Cardiac septum (tissue), 1 donor: ENCODE measurements at regions of chr11 and their contacts with region 1.

Region 1: DNA sequence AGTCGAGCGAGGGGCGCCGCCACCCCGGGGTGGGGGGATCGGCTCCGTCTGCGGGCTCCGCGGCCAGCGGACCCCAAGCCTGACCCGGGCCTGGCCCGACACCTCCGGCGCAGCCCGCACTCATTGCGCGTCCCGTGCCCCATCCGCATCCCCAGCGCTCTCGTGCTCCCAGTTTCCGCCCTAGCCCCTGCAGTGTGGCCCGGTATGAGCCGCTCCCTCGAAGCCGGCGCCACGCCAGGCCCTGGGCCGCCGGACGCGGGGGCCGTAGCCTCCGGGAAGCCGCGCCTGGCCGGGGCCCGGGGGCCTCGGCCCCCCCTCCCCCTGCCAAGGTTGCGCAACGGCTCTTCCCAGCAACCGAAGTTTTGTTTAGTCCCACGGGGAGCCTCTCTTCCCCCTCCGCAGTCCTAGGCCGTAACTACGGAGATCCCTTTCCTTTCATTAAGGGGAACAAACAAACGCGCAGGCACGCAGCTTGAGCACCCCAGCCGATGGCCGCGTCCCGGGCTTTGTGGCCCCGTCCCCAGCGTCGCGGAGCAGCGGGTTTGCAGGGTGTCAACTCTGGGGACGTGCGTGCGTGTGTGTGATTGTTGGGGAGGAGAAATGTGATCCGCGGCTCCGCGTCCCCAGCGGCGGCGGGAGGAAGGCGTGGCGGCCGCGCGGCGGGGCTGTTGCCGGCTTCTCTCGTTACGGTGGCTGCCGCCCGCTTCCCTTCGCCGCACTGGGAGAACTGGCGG is 883 bp downstream of the HIPK3 start:
- DNase-seq: peak; percentile 96

Region 2: GRCh38 chr11:33161120-33162005 is 96.7 kb before region 1 on chr11 and contains the start of gene CSTF3:
- intact Hi-C with region 1: loop called (anchors 2 kb)
- DNase-seq: peak; percentile 100
- total RNA-seq, gene CSTF3: 16.0 TPM

Region 3: GRCh38 chr11:33187998-33188722 is 69.9 kb before region 1 on chr11:
- intact Hi-C with region 1: no loop called
- DNase-seq: no peak

Region 4: DNA sequence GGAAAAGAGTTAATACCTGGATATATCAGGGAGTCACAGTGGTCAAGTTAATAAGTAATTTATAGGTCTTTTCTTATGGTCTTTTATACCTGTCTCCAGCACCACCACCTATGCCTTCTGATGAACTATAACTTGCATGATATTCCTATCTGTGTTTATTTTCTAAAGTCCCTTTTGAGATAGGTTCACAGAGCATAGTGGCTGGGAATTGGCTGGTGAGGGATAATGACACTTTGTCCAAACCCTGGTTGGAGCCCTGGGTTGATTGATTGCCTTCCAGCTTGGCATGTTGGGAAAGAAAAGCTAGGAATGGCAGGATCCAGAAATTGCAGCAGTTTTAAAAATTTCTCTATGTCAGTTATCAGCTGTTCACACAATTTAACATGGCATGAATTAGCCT is 22.3 kb after region 1 on chr11:
- intact Hi-C with region 1: no loop called
- DNase-seq: no peak

Region 5: DNA sequence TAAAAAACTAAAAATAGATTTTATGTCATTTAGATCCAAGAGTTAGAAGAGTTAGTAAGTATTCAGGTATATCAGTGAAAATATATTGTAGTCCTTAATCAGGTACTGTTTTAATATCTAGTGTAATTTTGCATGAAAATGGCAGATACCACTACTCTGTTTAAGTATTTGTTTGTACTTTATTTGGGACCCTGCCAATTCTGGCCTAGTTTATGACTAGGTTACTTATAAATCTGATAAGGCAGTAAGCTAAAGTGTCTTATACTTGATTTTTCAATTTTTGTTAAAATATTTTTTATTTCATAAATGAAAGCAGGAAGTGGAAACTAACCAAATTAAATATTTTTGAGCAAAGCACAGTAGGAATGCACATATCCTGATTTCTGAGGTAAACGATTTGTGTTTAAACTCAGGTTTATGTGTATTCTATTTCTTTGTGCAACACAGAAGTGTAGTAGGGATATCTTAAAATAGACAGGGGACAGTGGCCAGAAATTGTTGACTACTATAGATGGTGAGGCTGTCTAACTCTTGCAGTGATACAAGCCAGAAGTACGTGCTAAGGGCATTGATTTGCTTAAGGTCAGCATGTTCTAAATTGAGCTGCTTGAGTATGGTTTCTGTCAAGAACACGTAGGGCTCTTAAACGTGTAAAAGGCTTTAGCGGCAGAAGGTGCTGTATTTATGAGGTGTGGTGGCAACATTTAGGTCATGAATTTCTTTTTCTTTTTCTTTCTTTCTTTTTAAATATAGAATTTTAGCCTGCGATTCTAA is 33.1 kb after region 1 on chr11:
- intact Hi-C with region 1: loop called (anchors 5 kb)
- DNase-seq: no peak

Region 6: GRCh38 chr11:33329705-33330329 is 71.8 kb after region 1 on chr11:
- intact Hi-C with region 1: loop called (anchors 5 kb)
- DNase-seq: no peak

Region 7: DNA sequence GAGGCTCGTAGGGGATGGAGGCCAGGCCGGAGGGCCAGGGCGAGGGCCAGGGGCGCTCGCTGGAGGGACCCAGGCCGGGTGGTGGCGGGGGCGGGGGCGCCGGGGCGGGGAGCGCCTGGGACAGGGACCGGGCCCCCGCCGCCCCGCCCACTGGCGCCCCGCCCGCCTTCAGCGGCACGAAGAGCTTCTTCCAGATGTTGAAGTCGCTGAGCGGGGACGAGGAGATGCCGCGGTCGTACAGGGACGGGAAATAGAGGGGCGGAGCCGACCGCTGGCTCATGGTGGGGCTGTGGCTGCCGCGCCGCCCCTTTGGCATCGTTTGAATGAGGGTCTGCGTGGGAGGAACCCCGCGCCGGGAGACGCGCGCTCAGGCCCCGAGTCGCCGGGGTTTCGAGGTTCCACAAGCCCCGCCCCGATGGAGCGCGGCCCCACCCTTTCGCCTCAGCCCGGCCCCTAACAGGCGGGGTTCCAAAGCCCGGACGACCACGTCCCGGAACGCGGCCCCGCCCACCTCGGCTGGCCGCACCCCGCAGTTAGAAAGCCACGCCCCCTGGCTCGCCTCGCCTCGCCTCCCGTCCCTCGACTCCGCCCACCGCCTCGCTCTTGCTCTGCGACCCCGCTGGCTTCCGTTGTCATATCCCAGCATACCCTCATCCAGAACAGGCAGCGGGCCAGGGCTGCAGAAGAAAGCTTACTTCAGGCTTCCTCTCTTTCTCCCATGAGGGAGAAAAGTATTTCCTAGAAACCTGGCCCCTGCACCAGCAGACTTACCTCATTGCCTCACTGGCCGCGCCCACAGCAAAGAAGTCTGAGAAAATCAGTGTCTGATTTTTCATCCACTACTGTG is 442.6 kb after region 1 on chr11 and contains the start of gene C11orf91:
- intact Hi-C with region 1: loop called (anchors 5 kb)
- DNase-seq: peak; percentile 99
- total RNA-seq, gene C11orf91: 1.4 TPM

Region 8: GRCh38 chr11:33736148-33736809 is 478.2 kb after region 1 on chr11 and contains the start of gene CD59:
- intact Hi-C with region 1: loop called (anchors 5 kb)
- DNase-seq: peak; percentile 99
- total RNA-seq, gene CD59: 932 TPM